Cardiac septum (tissue), 1 donor: ENCODE measurements at regions of chr19 and their contacts with region 1.

Region 1: DNA sequence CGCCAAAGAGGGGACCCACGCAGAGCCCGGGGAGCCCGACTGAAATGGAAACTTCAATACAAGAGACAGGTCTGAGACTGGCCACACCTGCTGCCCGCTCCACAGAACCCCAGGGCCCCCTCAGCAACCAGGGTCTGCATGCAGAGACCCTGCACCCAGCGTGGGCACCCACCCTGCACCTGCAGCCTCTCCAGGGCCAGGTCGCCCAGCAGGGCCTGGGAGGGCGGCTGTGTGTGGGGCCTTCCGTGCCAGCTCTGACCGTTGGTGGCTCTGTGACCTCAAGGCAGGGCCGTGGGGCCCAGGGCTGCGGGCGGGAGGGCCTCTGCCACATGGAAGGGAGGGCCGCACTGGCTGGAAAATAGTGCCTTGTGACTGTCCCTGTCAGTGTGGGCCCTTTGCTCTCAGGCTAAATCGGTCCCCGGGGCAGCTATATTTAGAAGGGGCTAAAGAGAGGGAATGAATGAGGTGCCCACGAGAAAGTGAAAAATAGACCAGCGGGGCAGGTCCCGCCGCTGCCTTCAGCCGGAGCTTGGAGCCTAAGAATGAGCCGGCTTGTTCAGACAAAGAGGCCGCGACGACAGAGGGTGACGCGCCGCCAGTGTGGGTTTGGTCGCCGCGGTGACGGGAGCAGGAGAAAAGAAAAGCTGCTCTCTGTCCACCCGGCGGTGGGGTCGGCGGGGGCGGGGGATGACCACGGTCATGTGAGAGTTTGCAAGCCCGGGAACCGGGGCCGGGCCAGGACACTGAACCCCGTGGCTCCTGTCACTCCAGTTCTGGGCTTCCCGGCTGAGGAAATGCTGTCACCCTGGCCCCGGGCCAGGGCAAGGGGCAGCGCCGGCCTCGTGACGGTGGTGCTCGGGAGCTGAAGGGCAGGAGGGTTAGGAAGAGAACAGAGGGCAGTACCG is 70.5 kb downstream of the GADD45B start:
- DNase-seq: peak; percentile 89

Region 2: DNA sequence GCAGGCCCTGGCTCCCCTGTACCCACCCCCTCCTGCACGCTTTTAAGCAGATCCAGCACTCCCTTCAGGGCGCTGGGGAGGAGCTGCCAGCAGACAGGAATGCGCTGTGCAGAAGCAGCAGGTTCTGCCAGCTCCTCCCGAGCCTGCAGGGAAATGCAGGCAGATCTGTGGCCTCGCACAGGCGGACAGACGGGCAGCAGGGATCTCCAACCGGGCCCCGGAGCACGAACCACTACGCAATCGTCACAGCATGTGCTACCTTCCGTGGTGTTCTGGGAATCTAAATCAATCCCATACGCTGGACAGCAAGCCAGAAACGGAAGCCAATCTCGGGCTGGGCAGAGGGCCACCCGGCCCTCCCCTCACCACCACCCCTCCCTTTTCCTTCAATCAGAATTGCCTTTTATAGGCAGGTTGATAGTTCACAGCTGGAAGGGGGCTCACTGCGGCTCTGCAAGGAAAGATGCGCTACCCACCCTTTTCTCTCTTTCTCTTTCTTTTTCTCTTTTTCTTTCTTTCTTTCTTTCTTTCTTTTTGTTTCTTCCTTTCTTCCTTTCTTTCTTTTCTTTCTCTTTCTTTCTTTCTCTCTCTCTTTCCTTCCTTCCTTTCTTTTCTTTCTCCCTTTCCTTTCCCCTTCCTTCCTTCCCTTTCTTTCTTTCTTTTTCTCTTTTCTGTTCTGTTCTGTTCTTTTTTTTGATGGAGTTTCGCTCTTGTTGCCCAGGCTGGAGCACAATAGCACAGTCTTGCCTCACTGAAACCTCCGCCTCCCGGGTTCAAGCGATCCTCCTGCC is 56.2 kb after region 1 on chr19:
- intact Hi-C with region 1: loop called (anchors 1 kb)
- DNase-seq: peak; percentile 86

Region 3: DNA sequence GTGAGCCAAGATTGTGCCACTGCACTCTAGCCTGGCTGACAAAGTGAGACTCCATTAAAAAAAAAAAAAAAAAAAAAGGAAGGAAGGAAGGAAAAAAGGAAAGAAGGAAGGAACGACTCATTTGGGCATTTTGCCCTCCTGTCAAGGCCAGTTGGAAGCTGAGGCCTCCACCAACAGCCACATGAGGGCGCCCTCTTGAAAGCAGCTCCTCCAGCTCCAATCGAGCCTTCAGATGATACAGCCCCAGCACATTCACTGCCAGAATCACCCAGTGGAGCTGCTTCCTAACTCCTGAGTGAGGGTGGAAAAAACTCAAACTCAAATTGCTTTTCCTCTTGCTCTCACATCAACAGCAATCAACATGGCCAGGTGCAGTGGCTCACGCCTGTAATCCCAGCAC is 115.2 kb after region 1 on chr19:
- intact Hi-C with region 1: no loop called
- DNase-seq: no peak